MCF 10A (cell line): ENCODE measurements at regions of chr20 and their contacts with region 1.

Region 1: DNA sequence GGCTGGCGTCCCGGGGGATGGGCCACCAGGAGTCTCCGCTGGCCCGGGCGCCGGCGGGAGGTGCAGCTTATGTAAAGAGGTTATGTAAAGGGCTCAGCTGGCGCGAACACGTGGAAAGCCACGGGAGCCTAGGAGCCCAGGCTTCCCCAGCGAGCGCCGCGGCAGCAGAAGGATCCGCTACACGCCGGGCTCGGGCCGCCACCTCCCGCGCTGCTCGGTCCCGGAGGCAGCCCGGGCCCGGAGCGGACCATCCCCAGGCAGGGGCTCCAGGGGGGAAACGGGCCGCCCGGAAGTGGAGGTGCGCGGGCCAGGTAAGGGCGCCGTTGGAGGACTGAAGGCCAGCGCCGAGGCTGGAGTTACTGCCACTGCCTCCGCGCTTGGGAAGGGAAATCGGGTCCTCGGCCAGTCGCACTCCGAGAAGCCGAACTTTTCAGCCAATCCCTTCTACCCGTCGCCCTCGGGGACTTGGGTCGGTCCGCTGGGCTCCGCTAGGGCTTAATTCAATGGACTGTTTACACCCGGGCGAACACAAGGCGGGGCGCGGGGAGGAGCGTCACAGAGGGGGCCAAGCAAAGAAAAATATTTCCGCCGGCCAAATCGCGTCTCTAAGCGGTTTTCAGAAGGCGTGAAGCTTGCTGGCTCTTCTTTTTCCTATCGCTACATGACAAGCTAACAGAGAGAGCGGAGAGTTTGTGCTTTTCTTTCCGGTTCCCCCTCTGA is 398 bp downstream of the STK35 start:
- DNase-seq: peak; percentile 94
- H3K4me3 Mint-ChIP-seq: peak overlapping the region; percentile 86
- H3K27ac Mint-ChIP-seq: peak overlapping the region; percentile 100
- H3K4me1 Mint-ChIP-seq: peaks cover 23% of the 10 kb centered on the region
- H3K27me3 Mint-ChIP-seq: no peaks in the 10 kb centered on the region
- CTCF ChIP-seq: no peak

Region 2: DNA sequence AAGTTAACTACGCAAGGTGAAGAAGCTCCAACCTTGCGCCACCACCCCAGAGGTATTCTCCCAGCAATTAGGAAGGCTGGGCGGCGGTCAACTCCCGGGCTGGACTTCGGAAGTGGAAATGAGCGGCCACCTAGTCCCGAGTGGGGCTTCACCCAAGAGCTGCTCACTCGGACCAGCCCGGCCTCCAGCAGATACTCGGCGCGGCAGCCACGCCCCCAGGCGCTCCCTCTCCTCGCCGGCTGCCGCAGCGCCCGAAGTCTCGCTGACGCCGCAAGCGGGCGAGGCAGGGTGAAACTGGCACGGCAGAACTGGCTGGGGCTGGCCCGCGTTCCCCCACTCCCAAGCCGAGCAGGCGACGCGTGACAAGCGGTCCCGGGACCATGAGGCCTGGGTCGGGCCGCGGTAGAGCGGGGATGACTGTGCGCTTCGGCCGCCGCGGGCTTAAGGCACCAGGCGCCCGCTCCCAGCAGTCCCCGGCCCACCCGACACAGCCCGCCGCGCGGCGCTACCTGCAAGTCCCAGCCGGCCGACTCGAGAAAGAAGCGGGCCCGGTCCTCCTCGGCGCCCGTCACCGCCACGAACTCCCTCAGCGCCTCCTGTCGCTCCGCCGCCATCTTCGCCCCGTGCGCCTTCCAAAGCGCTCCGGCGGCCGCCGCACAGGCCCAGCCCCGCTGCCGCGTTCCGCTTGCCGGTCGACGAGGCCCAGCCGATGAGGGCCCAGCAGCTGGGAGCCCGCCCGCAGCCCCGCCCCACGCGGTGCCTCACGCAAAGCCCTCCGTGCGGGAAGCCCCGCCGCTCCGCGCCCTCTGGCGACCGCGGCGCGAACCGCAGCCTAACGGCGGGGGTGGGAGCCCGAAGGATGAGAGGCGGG is 635.6 kb before region 1 on chr20 and contains the start of gene NSFL1C:
- CTCF ChIA-PET with region 1: no interaction called
- POLR2A ChIA-PET with region 1: no interaction called
- intact Hi-C with region 1: loop called (anchors 10 kb)
- DNase-seq: peak; percentile 91
- H3K4me3 Mint-ChIP-seq: peak within 1 kb of the TSS; percentile 78
- H3K27ac Mint-ChIP-seq: peak within 1 kb of the TSS; percentile 66
- H3K4me1 Mint-ChIP-seq: peaks cover 38% of the 10 kb centered on the region
- H3K27me3 Mint-ChIP-seq: no peaks in the 10 kb centered on the region
- CTCF ChIP-seq: peak; percentile 99
- total RNA-seq, gene NSFL1C: 63.3 and 76.1 TPM in 2 replicates

Region 3: DNA sequence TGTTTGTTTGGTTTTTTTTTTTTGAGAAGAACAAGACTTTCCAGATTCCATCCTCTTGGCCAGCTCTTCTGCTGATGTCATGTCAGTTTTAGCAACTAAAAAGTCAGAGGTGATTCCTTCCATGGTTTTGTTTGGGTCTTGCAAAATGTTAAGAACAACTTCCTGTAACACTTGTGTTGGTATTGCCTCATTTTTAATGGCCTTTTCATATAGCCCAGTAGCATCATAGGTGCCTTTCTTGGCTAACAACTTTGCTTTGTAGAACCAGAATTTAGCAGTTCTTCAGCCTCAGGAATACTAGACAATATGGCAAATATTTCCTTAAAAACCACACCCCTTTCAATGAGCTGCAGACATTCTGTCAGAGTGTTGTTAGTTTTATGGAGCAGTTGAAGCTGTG is 345.0 kb before region 1 on chr20:
- CTCF ChIA-PET with region 1: no interaction called
- POLR2A ChIA-PET with region 1: no interaction called
- intact Hi-C with region 1: no loop called
- DNase-seq: no peak
- H3K4me3 Mint-ChIP-seq: no peak overlapping the region
- H3K27ac Mint-ChIP-seq: no peak overlapping the region
- H3K4me1 Mint-ChIP-seq: peaks cover 19% of the 10 kb centered on the region
- H3K27me3 Mint-ChIP-seq: no peaks in the 10 kb centered on the region
- CTCF ChIP-seq: no peak

Region 4: DNA sequence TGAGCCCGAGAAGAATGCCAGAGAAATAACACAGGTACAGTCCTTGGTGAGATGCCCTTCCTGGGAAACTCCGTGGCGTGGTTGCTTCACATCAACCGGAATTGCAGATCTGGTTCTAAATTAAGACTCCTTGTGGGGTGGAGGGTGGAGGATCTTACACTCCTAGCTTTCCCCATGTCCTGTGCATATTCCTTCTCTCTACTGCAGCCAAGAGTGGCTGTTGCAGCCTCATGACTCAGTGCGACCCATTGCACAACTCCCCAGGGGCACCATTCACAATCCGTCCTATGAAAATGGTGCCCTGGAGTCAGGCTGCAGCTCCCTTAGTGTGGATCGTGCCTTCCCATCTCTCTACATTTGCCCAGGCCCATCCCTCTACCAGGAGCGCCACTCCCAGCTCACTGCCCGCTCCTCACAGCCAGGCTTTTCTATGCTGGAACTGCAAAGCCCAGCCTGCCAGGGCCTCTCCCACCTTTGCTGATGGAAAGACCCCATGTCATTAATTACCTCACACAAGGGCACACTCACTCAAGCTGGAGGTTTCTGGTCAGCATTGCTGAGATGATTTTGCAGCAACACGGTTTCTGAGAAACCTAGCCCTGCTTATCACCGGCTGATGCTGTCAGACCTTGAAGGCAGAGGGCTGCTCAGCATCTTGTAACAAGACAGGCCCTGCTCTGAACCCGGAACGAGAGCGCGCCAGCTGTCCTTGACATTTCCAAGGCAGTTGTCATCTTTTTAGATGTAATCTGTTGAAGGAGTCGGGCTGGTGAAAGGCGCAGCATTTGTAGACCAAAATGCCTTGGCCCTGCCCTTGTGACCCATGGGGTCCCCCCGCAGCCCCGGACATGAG is 167.1 kb before region 1 on chr20:
- CTCF ChIA-PET with region 1: no interaction called
- POLR2A ChIA-PET with region 1: interaction called, 14 read pairs
- intact Hi-C with region 1: no loop called
- DNase-seq: peak; percentile 99
- H3K4me3 Mint-ChIP-seq: peak overlapping the region; percentile 43
- H3K27ac Mint-ChIP-seq: peak overlapping the region; percentile 86
- H3K4me1 Mint-ChIP-seq: peaks cover 43% of the 10 kb centered on the region
- H3K27me3 Mint-ChIP-seq: no peaks in the 10 kb centered on the region
- CTCF ChIP-seq: no peak

Region 5: DNA sequence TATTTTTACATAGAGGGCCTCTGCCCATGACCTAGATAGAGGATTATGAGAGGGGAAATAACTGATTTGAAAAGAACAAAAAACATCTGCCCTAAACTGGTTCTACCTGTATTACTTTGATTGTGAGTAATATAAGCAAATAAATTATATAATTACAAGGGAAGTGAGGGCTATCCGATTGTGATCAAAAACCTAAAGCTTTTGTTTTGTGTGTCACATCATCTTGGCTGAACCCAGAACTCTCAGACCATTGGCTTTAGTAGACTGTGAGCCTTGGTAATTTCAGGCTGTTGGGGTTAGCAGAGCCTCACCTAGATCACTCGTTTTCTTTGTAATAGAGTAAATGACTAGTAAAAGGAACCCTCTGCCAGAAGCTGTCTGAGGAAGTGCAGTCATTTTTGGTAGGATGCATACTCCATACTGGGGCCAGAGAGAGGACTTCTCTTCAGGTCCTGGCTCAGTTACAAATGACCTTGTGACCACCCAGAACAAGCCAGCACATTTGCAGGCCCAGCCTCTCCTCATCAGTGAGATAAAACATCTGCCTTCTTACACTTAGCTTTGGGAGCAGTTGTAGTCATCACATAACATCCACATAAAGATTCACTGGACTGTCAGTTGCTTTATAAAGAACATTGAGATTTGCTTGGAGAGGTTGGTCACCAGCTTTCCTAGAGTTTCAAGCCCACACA is 13.1 kb after region 1 on chr20:
- CTCF ChIA-PET with region 1: interaction called, 5 read pairs
- POLR2A ChIA-PET with region 1: interaction called, 24 read pairs
- intact Hi-C with region 1: no loop called
- DNase-seq: no peak
- H3K4me3 Mint-ChIP-seq: no peak overlapping the region
- H3K27ac Mint-ChIP-seq: no peak overlapping the region
- H3K4me1 Mint-ChIP-seq: peaks cover 20% of the 10 kb centered on the region
- H3K27me3 Mint-ChIP-seq: no peaks in the 10 kb centered on the region
- CTCF ChIP-seq: no peak

Region 6: GRCh38 chr20:2140561-2140960 is 38.5 kb after region 1 on chr20:
- CTCF ChIA-PET with region 1: no interaction called
- POLR2A ChIA-PET with region 1: interaction called, 12 read pairs
- intact Hi-C with region 1: no loop called
- DNase-seq: no peak
- H3K4me3 Mint-ChIP-seq: no peak overlapping the region
- H3K27ac Mint-ChIP-seq: no peak overlapping the region
- H3K4me1 Mint-ChIP-seq: no peaks in the 10 kb centered on the region
- H3K27me3 Mint-ChIP-seq: no peaks in the 10 kb centered on the region
- CTCF ChIP-seq: no peak

Region 7: GRCh38 chr20:2156666-2157624 is 54.9 kb after region 1 on chr20:
- CTCF ChIA-PET with region 1: interaction called, 5 read pairs
- POLR2A ChIA-PET with region 1: interaction called, 51 read pairs
- intact Hi-C with region 1: loop called (anchors 10 kb)
- DNase-seq: peak; percentile 41
- H3K4me3 Mint-ChIP-seq: no peak overlapping the region
- H3K27ac Mint-ChIP-seq: no peak overlapping the region
- H3K4me1 Mint-ChIP-seq: peaks cover 21% of the 10 kb centered on the region
- H3K27me3 Mint-ChIP-seq: no peaks in the 10 kb centered on the region
- CTCF ChIP-seq: no peak

Region 8: DNA sequence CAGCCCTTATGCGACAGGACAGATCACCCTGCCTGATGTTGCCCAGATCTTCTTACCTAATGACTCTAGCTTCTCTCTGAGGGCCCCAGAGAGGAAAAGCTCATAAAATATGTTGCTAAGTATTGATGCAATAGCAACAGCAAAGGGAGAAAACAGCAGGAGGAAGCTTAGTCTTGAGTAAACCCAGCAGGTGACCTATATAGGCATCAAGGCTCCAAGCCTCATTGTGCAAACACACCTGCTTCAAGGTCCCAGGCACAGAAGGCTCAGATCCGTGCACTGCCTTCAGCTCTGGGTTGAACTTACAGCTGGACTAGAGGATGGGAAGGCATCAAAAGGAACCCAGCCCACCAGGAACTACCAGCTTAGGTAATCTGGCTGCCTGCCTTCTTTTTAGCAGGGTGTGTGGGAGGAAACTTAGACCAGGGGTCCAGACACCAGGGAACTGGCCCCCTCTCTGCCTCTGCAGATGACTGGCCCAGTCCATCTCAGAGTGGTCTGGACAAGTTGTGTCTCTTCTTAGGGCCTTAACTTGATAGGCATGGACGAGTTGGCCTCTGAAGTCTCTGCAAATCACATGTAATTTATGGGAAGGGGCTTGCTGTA is 228.2 kb after region 1 on chr20:
- CTCF ChIA-PET with region 1: no interaction called
- POLR2A ChIA-PET with region 1: no interaction called
- intact Hi-C with region 1: no loop called
- DNase-seq: no peak
- H3K4me3 Mint-ChIP-seq: no peak overlapping the region
- H3K27ac Mint-ChIP-seq: no peak overlapping the region
- H3K4me1 Mint-ChIP-seq: no peaks in the 10 kb centered on the region
- H3K27me3 Mint-ChIP-seq: peaks cover 48% of the 10 kb centered on the region
- CTCF ChIP-seq: no peak

Region 9: DNA sequence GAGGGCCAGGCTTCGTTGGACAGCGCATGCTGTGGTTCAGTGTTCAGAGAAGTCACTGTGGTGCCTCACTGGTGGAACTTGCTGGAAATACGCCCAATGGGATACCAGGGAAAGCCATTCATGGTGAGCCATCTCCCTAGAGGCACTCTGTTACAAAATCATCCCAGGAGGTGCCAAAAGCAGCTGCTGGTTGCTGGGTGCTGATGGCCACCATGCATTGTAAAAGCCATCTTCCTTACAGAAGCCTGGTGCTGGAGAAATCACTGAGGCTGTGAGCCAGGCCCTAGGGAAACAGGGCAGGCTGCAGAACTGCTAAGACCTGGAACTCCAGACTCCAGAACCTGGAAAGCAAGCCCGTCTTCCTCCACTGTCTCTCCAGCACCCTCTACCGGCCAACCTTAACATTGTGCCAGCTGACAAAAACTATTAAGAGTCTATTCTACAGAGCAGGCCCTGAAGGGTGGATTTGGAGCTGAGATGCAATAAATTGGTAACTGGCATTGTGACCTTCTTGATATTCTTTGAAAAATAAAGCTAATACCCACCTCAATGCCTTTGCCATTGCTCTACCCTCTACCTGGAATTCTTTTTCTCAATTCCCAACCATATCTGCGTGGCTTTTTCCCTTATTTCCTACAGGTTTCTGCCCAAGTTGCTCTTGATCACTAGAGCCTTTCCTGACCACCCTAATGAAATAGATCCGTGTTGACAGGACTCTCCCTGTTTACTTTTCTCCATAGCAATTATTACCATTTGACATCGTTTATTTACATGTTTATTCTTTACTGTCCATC is 350.1 kb after region 1 on chr20:
- CTCF ChIA-PET with region 1: interaction called, 3 read pairs
- POLR2A ChIA-PET with region 1: interaction called, 5 read pairs
- intact Hi-C with region 1: loop called (anchors 5 kb)
- DNase-seq: peak; percentile 81
- H3K4me3 Mint-ChIP-seq: no peak overlapping the region
- H3K27ac Mint-ChIP-seq: no peak overlapping the region
- H3K4me1 Mint-ChIP-seq: peaks cover 31% of the 10 kb centered on the region
- H3K27me3 Mint-ChIP-seq: no peaks in the 10 kb centered on the region
- CTCF ChIP-seq: peak; percentile 70

Region 10: GRCh38 chr20:2859330-2860121 is 757.5 kb after region 1 on chr20:
- CTCF ChIA-PET with region 1: no interaction called
- POLR2A ChIA-PET with region 1: no interaction called
- intact Hi-C with region 1: no loop called
- DNase-seq: no peak
- H3K4me3 Mint-ChIP-seq: no peak overlapping the region
- H3K27ac Mint-ChIP-seq: no peak overlapping the region
- H3K4me1 Mint-ChIP-seq: no peaks in the 10 kb centered on the region
- H3K27me3 Mint-ChIP-seq: no peaks in the 10 kb centered on the region
- CTCF ChIP-seq: no peak